AG04450 (cell line): ENCODE measurements at regions of chr5 and their contacts with region 1.

Region 1: DNA sequence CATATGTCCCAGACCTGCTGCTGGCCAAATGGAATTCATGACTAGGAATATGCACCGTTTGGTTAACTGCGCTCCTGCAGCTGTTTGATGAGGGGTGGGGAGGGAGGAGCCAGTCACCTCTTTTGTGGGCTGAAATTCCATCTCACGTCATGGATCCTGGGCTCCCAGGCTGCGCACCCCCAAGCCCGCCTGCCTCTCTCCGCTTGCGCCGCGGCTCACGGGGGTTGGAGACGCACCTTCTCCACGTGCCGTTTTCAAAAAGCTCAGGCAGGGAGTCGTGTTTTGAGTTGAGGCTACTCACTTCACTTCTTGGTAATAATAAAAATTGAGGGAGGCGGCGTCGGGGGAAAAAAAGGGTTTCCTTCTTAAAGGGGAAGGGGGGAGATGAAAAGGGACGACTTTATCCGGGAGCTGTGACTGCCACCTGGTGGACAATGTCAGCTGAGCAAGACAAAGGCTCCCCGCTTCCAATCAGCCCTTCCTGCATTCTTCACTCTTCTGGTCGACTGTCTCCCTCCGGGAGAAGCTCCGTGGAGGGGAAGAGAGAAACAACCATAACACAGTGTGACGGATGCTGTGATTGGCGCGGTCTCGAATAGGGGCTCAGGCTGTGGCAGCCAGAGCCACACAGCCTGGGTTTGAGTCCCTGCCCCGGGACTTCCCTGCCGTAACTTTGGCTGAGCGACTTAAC is 15.9 kb upstream of the C5orf47 start:
- DNase-seq: peak; percentile 73
- H3K4me3 ChIP-seq: peak overlapping the region; percentile 58
- H3K27ac ChIP-seq: no peak overlapping the region
- H3K27me3 ChIP-seq: peaks cover 5% of the 10 kb centered on the region
- CTCF ChIP-seq: peak; percentile 82

Region 2: GRCh38 chr5:173853370-173854131 is 119.5 kb before region 1 on chr5:
- CTCF ChIA-PET with region 1: no interaction called
- POLR2A ChIA-PET with region 1: no interaction called
- DNase-seq: no peak
- H3K4me3 ChIP-seq: no peak overlapping the region
- H3K27ac ChIP-seq: no peak overlapping the region
- H3K27me3 ChIP-seq: no peaks in the 10 kb centered on the region
- CTCF ChIP-seq: no peak

Region 3: DNA sequence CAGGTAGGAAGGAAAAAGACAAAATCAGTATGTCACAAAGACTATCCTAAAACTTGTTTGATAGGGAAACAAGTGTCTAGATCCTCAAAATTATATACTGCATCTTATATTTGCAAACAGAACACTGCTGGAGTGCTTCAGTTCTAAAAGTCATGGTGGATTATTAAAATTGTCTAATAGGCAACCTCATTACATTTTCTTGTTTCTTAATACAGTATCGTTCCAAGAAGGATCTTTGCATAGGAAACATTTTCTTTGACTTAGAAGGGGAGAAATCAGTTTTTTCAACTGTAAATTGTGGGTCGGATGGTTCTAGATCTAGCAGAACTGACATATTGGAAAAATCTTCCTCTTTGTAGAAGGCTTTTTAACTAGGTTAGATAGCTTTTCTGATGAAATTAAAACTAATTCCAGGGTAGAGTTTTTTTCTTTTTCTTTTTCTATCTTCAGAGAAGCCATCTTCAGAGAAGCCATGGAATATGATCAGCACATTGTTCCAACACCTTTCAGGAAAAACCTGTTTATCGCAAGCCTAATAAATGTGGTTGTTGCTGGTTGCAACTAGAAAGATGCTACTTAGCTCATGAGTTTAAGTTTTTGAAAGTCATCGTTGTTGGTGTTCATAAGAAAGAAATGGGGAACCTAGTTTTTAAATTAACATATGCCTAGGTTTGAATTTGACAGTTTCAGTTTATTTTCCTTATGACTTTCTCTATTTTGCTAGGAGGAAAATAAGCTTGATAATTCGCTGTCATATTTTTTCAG is 77.5 kb before region 1 on chr5:
- CTCF ChIA-PET with region 1: interaction called, 12 read pairs
- POLR2A ChIA-PET with region 1: no interaction called
- DNase-seq: no peak
- H3K4me3 ChIP-seq: no peak overlapping the region
- H3K27ac ChIP-seq: no peak overlapping the region
- H3K27me3 ChIP-seq: no peaks in the 10 kb centered on the region
- CTCF ChIP-seq: no peak

Region 4: GRCh38 chr5:173925448-173926071 is 47.5 kb before region 1 on chr5:
- CTCF ChIA-PET with region 1: interaction called, 18 read pairs
- POLR2A ChIA-PET with region 1: no interaction called
- DNase-seq: no peak
- H3K4me3 ChIP-seq: no peak overlapping the region
- H3K27ac ChIP-seq: no peak overlapping the region
- H3K27me3 ChIP-seq: no peaks in the 10 kb centered on the region
- CTCF ChIP-seq: peak; percentile 60

Region 5: GRCh38 chr5:173984218-173984617 is 11.1 kb after region 1 on chr5:
- CTCF ChIA-PET with region 1: interaction called, 16 read pairs
- POLR2A ChIA-PET with region 1: no interaction called
- DNase-seq: no peak
- H3K4me3 ChIP-seq: no peak overlapping the region
- H3K27ac ChIP-seq: no peak overlapping the region
- H3K27me3 ChIP-seq: peaks cover 15% of the 10 kb centered on the region
- CTCF ChIP-seq: peak; percentile 51

Region 6: GRCh38 chr5:174311531-174312269 is 338.6 kb after region 1 on chr5:
- CTCF ChIA-PET with region 1: interaction called, 10 read pairs
- POLR2A ChIA-PET with region 1: no interaction called
- DNase-seq: no peak
- H3K4me3 ChIP-seq: peak overlapping the region; percentile 47
- H3K27ac ChIP-seq: no peak overlapping the region
- H3K27me3 ChIP-seq: peaks cover 13% of the 10 kb centered on the region
- CTCF ChIP-seq: peak; percentile 75